ENCODE measurements at regions of chr17 and their contacts with region 1.

Region 1: GRCh38 chr17:81977211-81978027 is at the start of gene ASPSCR1:
- DNase-seq: peak; percentile 88 to 91 (median 89)
- H3K4me3 ChIP-seq: peak within 1 kb of the TSS; percentile 55 to 80 (median 75)
- H3K4me3 Mint-ChIP-seq: peak within 1 kb of the TSS; percentile 95 to 98
- H3K27ac ChIP-seq: peak within 1 kb of the TSS; percentile 64 to 90
- H3K27ac Mint-ChIP-seq: peak within 1 kb of the TSS; percentile 87 to 97 (median 91)
- H3K4me1 ChIP-seq: peaks cover 20 to 24% of the 10 kb centered on the region in 2 donors
- H3K4me1 Mint-ChIP-seq: peaks cover 34% of the 10 kb centered on the region
- H3K27me3 ChIP-seq: no peaks in the 10 kb centered on the region
- H3K27me3 Mint-ChIP-seq: peaks cover 5 to 7% (median 6%) of the 10 kb centered on the region in 3 donors
- CTCF ChIP-seq: no peak
- polyA plus RNA-seq, gene ASPSCR1: 25.5 to 31.9 (median 25.6) TPM

Region 2: DNA sequence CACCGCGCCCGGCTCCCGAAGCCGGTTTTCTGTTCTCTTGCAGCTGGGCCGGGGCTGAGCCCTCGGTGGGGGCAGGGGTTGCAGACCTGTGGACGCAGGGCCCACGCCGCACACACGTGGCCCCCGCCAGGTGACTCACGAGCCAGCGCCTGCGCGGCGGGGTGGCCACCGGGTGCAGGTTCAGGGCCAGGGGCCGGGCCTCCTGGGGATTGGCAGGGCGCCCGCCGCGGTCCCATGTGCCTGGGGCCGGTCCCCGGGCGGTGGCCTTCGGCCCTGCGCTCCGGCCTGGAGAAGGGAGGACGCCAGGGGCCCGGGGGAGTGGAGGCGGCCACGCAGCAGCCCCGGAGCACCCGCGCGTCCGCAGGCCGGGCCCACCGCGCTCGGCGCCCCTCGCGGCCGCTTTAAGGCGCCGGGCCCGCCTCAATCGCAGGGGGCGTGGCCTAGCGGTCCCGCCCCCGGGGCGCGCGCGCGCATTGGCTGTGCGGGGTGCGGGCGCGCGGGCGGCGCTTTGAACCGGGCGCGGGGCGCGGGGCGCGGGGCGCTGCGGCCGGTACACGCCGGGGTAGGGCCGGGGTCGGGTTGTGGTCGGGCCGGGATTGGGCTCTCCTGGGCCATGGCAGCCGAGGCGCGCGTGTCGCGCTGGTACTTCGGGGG is 265.5 kb before region 1 on chr17 and contains the start of gene SLC25A10:
- intact Hi-C with region 1: no loop called
- DNase-seq: peak; percentile 59 to 74 (median 72)
- H3K4me3 ChIP-seq: peak within 1 kb of the TSS; percentile 23 to 78 (median 46)
- H3K4me3 Mint-ChIP-seq: peak within 1 kb of the TSS; percentile 80 to 90
- H3K27ac ChIP-seq: no peak within 1 kb of the TSS
- H3K27ac Mint-ChIP-seq: peak within 1 kb of the TSS in 5 of 7 donors; percentile 38 to 81 (median 76)
- H3K4me1 ChIP-seq: peaks cover 26 to 42% of the 10 kb centered on the region in 2 donors
- H3K4me1 Mint-ChIP-seq: peaks cover 29% of the 10 kb centered on the region
- H3K27me3 ChIP-seq: peaks cover 0 to 8% of the 10 kb centered on the region in 2 donors
- H3K27me3 Mint-ChIP-seq: peaks cover 0 to 21% (median 13%) of the 10 kb centered on the region in 3 donors
- CTCF ChIP-seq: no peak
- polyA plus RNA-seq, gene SLC25A10: 1.8 to 2.3 (median 1.9) TPM

Region 3: DNA sequence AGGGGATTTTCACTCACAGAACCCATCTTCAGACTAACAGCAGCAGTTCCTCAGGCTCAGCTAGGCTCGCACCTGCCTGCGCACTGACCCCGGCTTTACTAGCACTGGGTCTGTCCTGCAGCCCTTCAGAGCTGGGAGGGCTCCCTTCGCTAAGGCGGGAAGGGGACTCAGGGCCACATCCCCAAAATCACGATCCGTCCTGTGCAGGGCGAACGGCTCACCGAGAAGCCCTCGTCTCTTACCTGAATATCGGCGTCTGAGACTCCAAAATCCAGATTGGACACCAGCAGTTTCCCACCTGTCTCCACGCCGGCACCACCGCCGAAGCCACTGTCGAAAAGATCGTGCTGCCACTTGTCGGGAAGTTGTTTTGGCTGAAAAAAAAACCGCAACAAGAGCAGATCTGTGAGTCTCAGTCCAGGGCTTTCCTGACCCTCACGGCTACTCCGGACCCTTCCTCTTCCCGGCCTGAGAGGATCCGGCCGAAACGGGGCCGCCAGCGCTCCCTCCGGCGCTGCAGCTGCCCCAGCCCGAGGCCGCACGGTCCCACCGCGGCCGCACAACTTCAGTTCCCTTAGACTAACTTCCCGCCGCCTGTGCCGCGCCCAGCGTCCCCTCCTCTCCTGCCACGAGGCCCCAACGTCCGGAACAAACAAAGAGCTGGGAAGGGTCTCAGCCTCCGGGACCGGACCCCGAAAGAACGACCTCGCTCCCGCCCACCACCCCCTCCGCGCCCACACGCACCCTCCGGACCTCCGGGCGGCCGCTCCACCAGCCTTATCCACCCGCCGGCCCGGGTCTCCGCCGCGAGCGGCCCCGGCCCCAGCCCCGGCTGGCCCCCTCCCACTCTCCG is 86.7 kb before region 1 on chr17:
- intact Hi-C with region 1: no loop called
- DNase-seq: peak in 1 of 3 donors; percentile 38
- H3K4me3 ChIP-seq: peak overlapping the region; percentile 52 to 90 (median 75)
- H3K4me3 Mint-ChIP-seq: peak overlapping the region; percentile 89 to 90
- H3K27ac ChIP-seq: peak overlapping the region; percentile 55 to 82
- H3K27ac Mint-ChIP-seq: peak overlapping the region; percentile 85 to 98 (median 93)
- H3K4me1 ChIP-seq: peaks cover 16 to 25% of the 10 kb centered on the region in 2 donors
- H3K4me1 Mint-ChIP-seq: peaks cover 15% of the 10 kb centered on the region
- H3K27me3 ChIP-seq: no peaks in the 10 kb centered on the region
- H3K27me3 Mint-ChIP-seq: peaks cover 0 to 2% (median 0%) of the 10 kb centered on the region in 3 donors
- CTCF ChIP-seq: no peak

Region 4: GRCh38 chr17:81927653-81928543 is 49.5 kb before region 1 on chr17 and contains the start of gene MAFG:
- intact Hi-C with region 1: loop called in 1 of 2 experiments (anchors 5 kb)
- DNase-seq: peak; percentile 89 to 95 (median 95)
- H3K4me3 ChIP-seq: peak within 1 kb of the TSS; percentile 70 to 81 (median 74)
- H3K4me3 Mint-ChIP-seq: peak within 1 kb of the TSS; percentile 91 to 93
- H3K27ac ChIP-seq: peak within 1 kb of the TSS; percentile 95 to 99
- H3K27ac Mint-ChIP-seq: peak within 1 kb of the TSS; percentile 97 to 98 (median 98)
- H3K4me1 ChIP-seq: peaks cover 48 to 54% of the 10 kb centered on the region in 2 donors
- H3K4me1 Mint-ChIP-seq: peaks cover 47% of the 10 kb centered on the region
- H3K27me3 ChIP-seq: peaks cover 9 to 39% of the 10 kb centered on the region in 2 donors
- H3K27me3 Mint-ChIP-seq: peaks cover 31 to 44% (median 32%) of the 10 kb centered on the region in 3 donors
- CTCF ChIP-seq: peak; percentile 33
- polyA plus RNA-seq, gene MAFG: 7.4 to 66.0 (median 7.6) TPM

Measured in CD14-positive monocyte (primary cell).